SK-N-SH (cell line): ENCODE measurements at regions of chr2 and their contacts with region 1.

Region 1: DNA sequence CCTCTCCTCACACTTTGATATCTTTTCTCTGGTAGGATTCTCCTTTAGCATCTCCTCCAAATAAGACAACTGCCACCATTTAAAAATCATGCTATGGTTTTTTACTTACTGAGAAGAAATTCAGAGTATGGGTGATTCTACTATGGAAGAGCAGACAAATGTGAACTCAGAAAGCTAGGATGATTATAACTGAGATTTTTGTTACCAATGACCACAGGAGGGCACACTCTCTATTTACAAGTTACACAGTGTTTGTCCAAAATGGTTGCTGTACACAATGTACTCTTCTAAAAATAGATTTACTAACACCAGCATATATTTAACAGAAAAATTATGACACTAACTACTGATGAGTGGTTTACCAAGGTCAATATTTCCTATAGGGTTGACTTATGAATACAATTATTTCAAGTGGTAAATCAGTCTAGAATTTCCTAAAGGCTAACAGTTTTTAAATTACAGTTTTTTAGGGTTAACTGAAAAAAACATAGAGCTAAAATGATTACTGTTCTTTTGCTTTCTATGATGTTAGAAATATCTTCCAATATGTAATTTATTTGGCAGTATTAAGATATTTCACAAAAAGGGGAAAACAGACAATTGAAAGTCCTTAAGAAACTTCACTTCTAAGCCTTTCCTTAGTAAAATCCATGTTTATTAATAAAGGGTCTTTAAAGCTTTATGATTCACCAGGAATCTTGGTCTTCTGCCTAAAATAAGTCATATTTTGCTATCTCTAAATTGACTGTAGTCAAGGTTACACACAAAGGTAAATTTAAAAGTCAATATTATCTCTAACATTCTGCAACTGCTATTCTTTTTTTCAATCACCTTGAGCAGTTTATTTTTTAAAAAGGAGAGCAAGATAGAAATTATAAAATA is 57.2 kb downstream of the MAP4K3 start:
- DNase-seq: peak; percentile 60
- H3K4me3 ChIP-seq: no peak overlapping the region
- H3K27ac ChIP-seq: peak overlapping the region; percentile 43 to 49; a peak in 3 of 4 replicates
- H3K4me1 ChIP-seq: peaks cover 3 to 28% of the 10 kb centered on the region in 2 experiments
- H3K27me3 ChIP-seq: no peaks in the 10 kb centered on the region
- CTCF ChIP-seq: peak; percentile 84
- EP300 ChIP-seq: no peak
- RAD21 ChIP-seq: peak; percentile 91

Region 2: GRCh38 chr2:39234754-39235153 is 145.1 kb before region 1 on chr2:
- CTCF ChIA-PET with region 1: no interaction called
- POLR2A ChIA-PET with region 1: no interaction called
- DNase-seq: no peak
- H3K4me3 ChIP-seq: no peak overlapping the region
- H3K27ac ChIP-seq: no peak overlapping the region
- H3K4me1 ChIP-seq: no peaks in the 10 kb centered on the region; a peak in 1 of 4 replicates
- H3K27me3 ChIP-seq: no peaks in the 10 kb centered on the region
- CTCF ChIP-seq: no peak
- EP300 ChIP-seq: no peak
- RAD21 ChIP-seq: no peak

Region 3: GRCh38 chr2:39368846-39369245 is 11.0 kb before region 1 on chr2:
- CTCF ChIA-PET with region 1: interaction called, 37 read pairs
- POLR2A ChIA-PET with region 1: no interaction called
- DNase-seq: peak; percentile 16
- H3K4me3 ChIP-seq: no peak overlapping the region
- H3K27ac ChIP-seq: no peak overlapping the region
- H3K4me1 ChIP-seq: no peaks in the 10 kb centered on the region; a peak in 1 of 4 replicates
- H3K27me3 ChIP-seq: no peaks in the 10 kb centered on the region
- CTCF ChIP-seq: no peak
- EP300 ChIP-seq: no peak
- RAD21 ChIP-seq: no peak

Region 4: DNA sequence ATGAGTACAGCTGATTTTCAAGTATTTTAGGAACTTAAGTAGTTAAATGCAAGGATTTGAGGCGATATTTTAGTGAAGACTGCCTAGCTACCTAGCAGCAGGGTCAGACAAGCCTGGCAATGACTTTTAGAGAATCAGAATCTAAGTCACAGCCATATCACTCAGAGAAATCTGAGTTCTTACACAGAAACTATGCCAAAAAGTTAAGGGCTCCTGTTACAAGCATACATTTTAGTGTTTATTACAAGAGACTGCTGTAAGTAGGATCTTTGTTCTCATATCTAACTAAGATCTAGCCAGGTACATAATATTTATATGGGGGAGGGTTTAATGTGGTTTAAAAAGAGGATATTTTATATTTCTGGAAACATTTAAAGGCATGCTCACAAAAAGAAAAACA is 19.7 kb after region 1 on chr2:
- CTCF ChIA-PET with region 1: interaction called, 23 read pairs
- POLR2A ChIA-PET with region 1: no interaction called
- DNase-seq: no peak
- H3K4me3 ChIP-seq: no peak overlapping the region
- H3K27ac ChIP-seq: peak overlapping the region; percentile 35 to 40; a peak in 3 of 4 replicates
- H3K4me1 ChIP-seq: peaks cover 21 to 29% of the 10 kb centered on the region in 2 experiments; a peak in 3 of 4 replicates
- H3K27me3 ChIP-seq: no peaks in the 10 kb centered on the region
- CTCF ChIP-seq: no peak
- EP300 ChIP-seq: 0 out of 4 replicates have a peak, but pooled peaks of 1 of the 2 experiments have one; percentile 8
- RAD21 ChIP-seq: no peak

Region 5: DNA sequence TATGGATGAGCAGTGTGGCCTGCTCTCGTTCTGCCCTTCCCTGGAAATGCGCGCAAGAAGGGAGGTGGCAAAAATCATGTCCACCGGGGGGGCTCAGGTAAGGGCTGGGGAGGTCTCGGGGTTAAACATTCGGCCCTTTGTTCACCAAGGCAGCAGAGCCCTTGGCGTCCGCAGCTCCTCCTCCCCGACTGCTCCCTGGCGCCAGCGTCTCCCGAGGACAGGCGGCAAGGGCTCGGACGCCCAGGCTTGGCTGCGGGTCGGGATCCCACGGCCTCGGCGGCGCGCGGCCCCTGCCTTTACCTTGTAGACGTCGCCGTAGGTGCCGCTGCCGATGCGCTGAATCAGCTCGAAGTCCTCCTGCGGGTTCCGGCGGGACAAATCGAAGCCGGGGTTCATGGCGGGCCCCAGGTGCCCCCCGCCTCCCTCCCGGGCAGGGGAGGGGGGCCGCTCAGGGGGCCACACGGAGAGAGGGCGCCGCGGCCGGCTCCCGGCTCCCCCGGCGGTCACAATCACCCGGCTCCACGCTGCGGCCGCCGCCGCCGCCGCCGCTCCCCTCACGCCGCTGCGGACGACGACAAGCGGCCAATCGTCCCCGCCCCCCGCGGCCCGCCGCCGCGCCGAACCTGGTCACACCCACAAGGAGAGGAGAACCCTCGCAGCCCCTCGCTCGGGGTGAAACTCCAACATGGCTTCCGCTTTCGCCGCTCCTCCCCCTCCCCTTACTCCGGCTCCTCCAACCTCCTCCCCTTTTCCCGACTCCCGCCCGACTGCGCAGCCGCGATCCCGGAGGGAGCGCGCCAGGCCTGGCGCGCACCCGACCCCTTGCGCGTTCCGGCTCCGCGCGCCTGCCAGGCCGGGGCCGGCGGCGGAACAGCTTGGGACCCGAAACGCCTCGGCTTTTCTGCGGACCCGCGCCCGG is 57.0 kb after region 1 on chr2 and contains the start of gene MAP4K3:
- CTCF ChIA-PET with region 1: interaction called, 25 read pairs
- POLR2A ChIA-PET with region 1: no interaction called
- DNase-seq: peak; percentile 100
- H3K4me3 ChIP-seq: peak within 1 kb of the TSS; percentile 78 to 99
- H3K27ac ChIP-seq: peak within 1 kb of the TSS; percentile 77 to 91
- H3K4me1 ChIP-seq: peaks cover 25 to 36% of the 10 kb centered on the region in 2 experiments
- H3K27me3 ChIP-seq: no peaks in the 10 kb centered on the region
- CTCF ChIP-seq: no peak; the same call in 1 of the 2 replicates
- EP300 ChIP-seq: 0 out of 4 replicates have a peak, but pooled peaks of 1 of the 2 experiments have one; percentile 25
- RAD21 ChIP-seq: peak; percentile 3; the same call in 1 of the 2 replicates
- polyA plus RNA-seq, gene MAP4K3: 8.8 and 11.1 TPM in 2 replicates

Region 6: GRCh38 chr2:39494784-39495251 is 114.9 kb after region 1 on chr2:
- CTCF ChIA-PET with region 1: no interaction called
- POLR2A ChIA-PET with region 1: no interaction called
- DNase-seq: no peak
- H3K4me3 ChIP-seq: no peak overlapping the region
- H3K27ac ChIP-seq: peak overlapping the region in 1 of 2 experiments; percentile 37; a peak in 3 of 4 replicates
- H3K4me1 ChIP-seq: peaks cover 0 to 12% of the 10 kb centered on the region in 2 experiments; a peak in 2 of 4 replicates
- H3K27me3 ChIP-seq: no peaks in the 10 kb centered on the region
- CTCF ChIP-seq: no peak
- EP300 ChIP-seq: peak in 1 of 2 experiments; percentile 79; a peak in 1 of 4 replicates
- RAD21 ChIP-seq: no peak

Region 7: DNA sequence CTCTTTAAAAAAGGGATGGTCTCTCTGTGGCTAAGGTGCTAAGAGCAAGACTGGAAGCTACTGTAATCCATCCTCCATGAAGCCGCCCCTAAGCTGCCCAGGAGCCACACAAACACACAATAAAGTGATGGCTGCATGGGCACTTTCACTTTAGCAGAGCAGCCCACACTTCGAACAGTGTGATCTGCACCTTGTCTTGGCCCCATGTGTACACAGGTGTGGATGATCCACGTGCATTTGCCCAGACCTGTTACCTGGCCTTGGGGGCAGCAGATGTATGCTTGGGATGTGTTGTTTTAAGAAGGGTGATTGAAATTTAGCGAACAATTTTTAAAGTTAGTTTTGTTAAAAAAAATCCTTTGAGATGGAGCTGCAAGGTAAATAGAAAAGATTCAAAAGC is 325.8 kb after region 1 on chr2:
- CTCF ChIA-PET with region 1: interaction called, 12 read pairs
- POLR2A ChIA-PET with region 1: no interaction called
- DNase-seq: no peak
- H3K4me3 ChIP-seq: no peak overlapping the region
- H3K27ac ChIP-seq: no peak overlapping the region
- H3K4me1 ChIP-seq: peaks cover 0 to 7% of the 10 kb centered on the region in 2 experiments; a peak in 2 of 4 replicates
- H3K27me3 ChIP-seq: no peaks in the 10 kb centered on the region
- CTCF ChIP-seq: no peak
- EP300 ChIP-seq: no peak
- RAD21 ChIP-seq: no peak